PC-3 (cell line): ENCODE measurements at regions of chr7 and their contacts with region 1.

Region 1: GRCh38 chr7:158695726-158696452 is 8.7 kb downstream of the NCAPG2 start:
- DNase-seq: peak; percentile 44
- ATAC-seq: peak; percentile 90
- H3K4me3 ChIP-seq: no peak overlapping the region
- H3K27ac ChIP-seq: no peak overlapping the region
- H3K4me1 ChIP-seq: no peaks in the 10 kb centered on the region
- H3K27me3 ChIP-seq: no peaks in the 10 kb centered on the region
- CTCF ChIP-seq: peak; percentile 58

Region 2: GRCh38 chr7:158740013-158740656 is 44.2 kb after region 1 on chr7:
- CTCF ChIA-PET with region 1: interaction called, 8 read pairs
- POLR2A ChIA-PET with region 1: no interaction called
- intact Hi-C with region 1: loop called (anchors 2 kb)
- DNase-seq: peak; percentile 81
- ATAC-seq: peak; percentile 80
- H3K4me3 ChIP-seq: peak overlapping the region; percentile 40
- H3K27ac ChIP-seq: peak overlapping the region; percentile 94
- H3K4me1 ChIP-seq: peaks cover 31% of the 10 kb centered on the region
- H3K27me3 ChIP-seq: no peaks in the 10 kb centered on the region
- CTCF ChIP-seq: no peak

Region 3: GRCh38 chr7:158750702-158751101 is 54.8 kb after region 1 on chr7:
- CTCF ChIA-PET with region 1: no interaction called
- POLR2A ChIA-PET with region 1: no interaction called
- intact Hi-C with region 1: no loop called
- DNase-seq: no peak
- ATAC-seq: no peak
- H3K4me3 ChIP-seq: no peak overlapping the region
- H3K27ac ChIP-seq: no peak overlapping the region
- H3K4me1 ChIP-seq: peaks cover 9% of the 10 kb centered on the region
- H3K27me3 ChIP-seq: no peaks in the 10 kb centered on the region
- CTCF ChIP-seq: no peak

Region 4: DNA sequence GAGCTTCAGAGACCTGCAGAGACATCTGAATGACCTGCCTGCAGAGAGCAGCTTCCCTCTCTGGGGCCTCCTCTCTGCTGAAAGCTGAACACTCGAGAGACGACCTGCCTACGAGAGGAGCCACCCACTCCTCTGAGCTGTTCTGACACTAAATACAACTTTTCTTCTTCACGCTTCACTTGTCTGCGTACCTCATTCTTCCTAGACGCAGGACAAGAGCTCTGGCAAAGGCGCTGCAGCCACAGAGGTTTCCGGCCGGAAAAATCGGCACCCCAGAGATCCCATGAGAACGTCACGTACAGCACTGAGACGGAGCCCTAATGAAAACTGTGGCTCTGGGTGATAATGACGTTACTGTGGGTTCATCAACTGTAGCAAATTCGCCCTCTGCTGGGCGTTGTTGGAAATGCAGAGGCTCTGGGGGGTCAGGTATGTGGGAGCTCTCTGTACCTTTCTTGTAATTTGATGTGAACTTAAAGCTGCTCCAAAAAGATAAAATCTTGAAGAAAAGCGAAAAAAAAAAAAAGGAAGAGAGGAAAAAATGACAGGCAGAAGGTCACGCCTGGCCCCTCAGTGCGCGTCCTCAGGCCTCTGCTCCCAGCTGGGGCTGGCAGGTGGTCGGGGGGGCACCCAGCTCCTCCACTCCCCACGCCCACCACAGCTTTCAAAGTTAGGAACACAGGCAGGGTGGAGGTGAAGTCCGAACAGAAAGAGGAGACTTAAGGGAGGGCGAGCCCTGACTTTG is 281.1 kb after region 1 on chr7:
- CTCF ChIA-PET with region 1: interaction called, 3 read pairs
- POLR2A ChIA-PET with region 1: no interaction called
- intact Hi-C with region 1: loop called (anchors 1 kb)
- DNase-seq: peak; percentile 82
- ATAC-seq: peak; percentile 54
- H3K4me3 ChIP-seq: peak overlapping the region; percentile 62
- H3K27ac ChIP-seq: no peak overlapping the region
- H3K4me1 ChIP-seq: no peaks in the 10 kb centered on the region; the same call in 1 of the 2 replicates
- H3K27me3 ChIP-seq: no peaks in the 10 kb centered on the region
- CTCF ChIP-seq: peak; percentile 88